ENCODE measurements at regions of chr12 and their contacts with region 1.

Region 1: DNA sequence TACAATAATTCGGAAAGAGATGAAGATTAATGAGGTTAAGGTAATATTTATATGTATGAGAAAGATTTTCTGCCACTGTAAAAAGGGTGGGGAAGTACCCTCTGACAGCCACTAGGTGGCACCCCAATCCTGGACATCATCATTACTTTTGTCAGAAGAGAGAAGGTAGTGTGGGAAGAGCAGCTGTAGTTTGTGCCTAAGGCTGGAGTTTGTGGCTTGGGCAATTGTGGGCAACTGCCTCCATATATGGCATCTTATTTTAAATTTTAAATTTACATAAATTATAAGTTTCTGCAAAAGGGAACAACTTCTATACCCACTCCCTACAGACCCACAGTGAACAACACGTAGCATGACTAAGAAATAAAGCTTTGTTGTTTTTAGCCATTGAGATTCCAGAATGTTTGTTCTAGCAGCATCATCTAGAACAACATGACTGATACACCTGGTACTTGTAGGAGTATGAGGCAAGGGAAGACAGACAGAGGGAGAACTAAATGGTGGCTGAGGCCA is 34.4 kb upstream of the SYCP3 start:
- DNase-seq: peak; percentile 74
- H3K4me3 ChIP-seq: no peak overlapping the region
- H3K27ac ChIP-seq: no peak overlapping the region
- H3K4me1 ChIP-seq: no peaks in the 10 kb centered on the region
- H3K27me3 ChIP-seq: no peaks in the 10 kb centered on the region
- CTCF ChIP-seq: peak; percentile 91

Region 2: DNA sequence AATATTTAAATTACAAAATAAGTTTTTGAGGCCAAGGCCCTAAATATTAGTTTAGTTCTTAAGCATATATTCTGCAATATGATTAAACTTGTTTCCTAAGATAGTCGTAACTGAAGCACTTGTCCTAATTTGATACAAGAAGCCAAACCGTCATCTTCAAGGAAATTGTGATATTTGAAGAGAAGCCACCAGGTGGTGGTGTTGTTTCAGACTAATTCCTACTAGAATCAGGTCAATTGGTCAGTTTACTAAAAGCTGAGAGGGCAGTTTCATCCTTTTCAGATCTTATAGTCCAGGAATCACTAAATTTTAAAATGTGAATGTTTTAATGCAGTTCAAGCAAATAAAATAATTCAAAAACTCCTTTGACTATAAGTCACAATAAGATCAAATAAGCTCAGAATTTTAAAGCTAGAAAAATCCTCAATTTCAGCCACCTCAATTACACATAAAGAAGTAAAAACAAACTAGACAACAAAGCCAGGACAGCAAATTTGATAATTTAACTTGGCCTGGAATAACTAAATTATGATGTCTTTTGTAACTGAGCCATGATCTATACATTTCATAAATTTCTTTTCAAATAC is 359.1 kb before region 1 on chr12:
- CTCF ChIA-PET with region 1: no interaction called
- POLR2A ChIA-PET with region 1: no interaction called
- intact Hi-C with region 1: loop called (anchors 5 kb)
- DNase-seq: peak; percentile 56
- H3K4me3 ChIP-seq: no peak overlapping the region
- H3K27ac ChIP-seq: no peak overlapping the region
- H3K4me1 ChIP-seq: no peaks in the 10 kb centered on the region
- H3K27me3 ChIP-seq: no peaks in the 10 kb centered on the region
- CTCF ChIP-seq: peak; percentile 69

Region 3: DNA sequence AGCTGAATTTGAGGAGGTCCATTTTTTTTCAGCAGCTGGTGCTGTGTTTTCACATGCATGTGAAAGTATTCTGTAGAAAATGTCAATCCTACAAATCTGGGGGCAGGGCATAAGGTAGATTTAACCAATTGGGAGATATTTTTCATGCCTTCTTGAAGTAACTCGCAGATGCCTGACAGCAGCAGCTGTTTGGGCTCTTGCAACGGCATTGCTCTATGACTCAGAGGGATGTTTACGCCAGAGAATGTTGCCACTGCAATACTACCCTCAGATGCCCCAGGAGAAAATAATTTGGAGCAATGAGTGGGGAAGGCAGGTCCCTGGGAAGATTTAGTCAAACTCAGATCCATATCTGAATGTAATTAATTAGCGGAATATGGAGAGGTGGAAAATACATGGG is 221.4 kb before region 1 on chr12:
- CTCF ChIA-PET with region 1: no interaction called
- POLR2A ChIA-PET with region 1: no interaction called
- intact Hi-C with region 1: no loop called
- DNase-seq: peak; percentile 26
- H3K4me3 ChIP-seq: no peak overlapping the region
- H3K27ac ChIP-seq: no peak overlapping the region
- H3K4me1 ChIP-seq: no peaks in the 10 kb centered on the region
- H3K27me3 ChIP-seq: no peaks in the 10 kb centered on the region
- CTCF ChIP-seq: no peak

Region 4: DNA sequence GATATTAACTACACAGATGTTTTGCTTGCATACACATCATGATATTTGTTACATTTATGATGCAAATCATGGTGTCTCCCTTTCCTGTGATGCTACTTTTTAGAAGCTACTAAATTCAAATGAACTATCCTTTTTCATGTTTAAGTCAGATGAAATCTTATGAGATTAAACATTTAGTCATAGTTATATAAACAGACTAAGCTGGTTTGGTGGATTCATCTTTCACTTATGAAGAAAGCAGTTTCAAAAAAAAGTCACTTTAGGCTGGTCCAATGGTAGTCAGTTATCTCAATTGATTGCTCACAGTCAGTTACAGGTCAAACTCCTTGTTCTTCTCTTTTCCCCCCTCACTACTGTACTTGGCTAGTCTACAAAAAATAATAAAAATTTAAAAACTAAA is 54.2 kb before region 1 on chr12:
- CTCF ChIA-PET with region 1: no interaction called
- POLR2A ChIA-PET with region 1: no interaction called
- intact Hi-C with region 1: no loop called
- DNase-seq: no peak
- H3K4me3 ChIP-seq: no peak overlapping the region
- H3K27ac ChIP-seq: no peak overlapping the region
- H3K4me1 ChIP-seq: no peaks in the 10 kb centered on the region
- H3K27me3 ChIP-seq: no peaks in the 10 kb centered on the region
- CTCF ChIP-seq: no peak

Region 5: DNA sequence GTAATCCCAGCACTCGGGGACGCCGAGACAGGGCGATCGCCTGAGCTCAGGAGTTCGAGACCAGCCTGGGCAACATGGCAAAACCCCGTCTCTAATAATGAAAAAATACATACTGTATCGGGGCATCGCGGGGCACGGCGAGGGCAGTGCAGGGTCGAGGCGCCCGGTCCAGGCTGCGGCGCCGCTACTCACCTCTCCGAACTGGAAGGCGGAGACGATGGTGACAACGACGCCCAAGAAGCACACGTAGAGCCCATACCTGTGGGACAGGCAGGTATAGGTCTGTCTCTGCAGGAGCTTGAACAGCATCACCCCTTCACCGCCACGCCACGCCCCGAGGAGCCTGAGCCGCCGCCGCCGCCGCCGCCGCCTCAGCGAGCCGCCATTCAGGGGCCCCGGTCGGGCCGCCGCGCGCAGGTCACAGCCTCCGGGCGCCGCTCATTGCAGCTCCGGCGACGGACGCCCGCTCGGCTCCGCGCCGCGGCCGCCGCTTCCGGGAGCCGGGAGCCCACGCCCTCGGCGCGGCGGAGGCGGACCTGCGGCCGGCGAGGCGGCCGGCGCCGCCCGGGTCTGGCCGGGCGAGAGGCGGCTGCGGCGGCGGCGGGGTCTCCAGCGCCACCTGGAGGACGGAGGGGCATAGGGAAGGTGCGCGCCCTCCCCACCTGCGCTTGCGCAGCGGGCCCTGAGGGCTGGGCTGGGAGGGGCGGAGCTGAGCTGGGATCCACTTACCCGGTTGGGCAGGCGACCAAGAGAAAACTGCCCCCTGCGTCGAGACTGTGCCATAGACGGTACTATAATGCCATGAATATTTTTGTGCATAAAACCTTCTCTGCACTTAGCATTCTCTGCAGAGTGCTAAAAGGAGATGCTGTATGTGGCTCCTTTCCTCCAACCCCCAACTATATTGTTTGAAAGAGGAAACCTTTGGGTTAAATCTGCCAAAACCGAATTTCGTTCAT is 56.9 kb after region 1 on chr12 and contains the start of gene GNPTAB:
- CTCF ChIA-PET with region 1: interaction called, 13 read pairs
- POLR2A ChIA-PET with region 1: no interaction called
- intact Hi-C with region 1: loop called (anchors 2 kb)
- DNase-seq: peak; percentile 95
- H3K4me3 ChIP-seq: peak within 1 kb of the TSS; percentile 81
- H3K27ac ChIP-seq: peak within 1 kb of the TSS; percentile 33
- H3K4me1 ChIP-seq: peaks cover 3% of the 10 kb centered on the region
- H3K27me3 ChIP-seq: no peaks in the 10 kb centered on the region
- CTCF ChIP-seq: peak; percentile 72
- total RNA-seq, gene GNPTAB: 19.9 and 21.7 TPM in 2 replicates

Region 6: GRCh38 chr12:101839324-101840283 is 65.9 kb after region 1 on chr12:
- CTCF ChIA-PET with region 1: interaction called, 5 read pairs
- POLR2A ChIA-PET with region 1: no interaction called
- intact Hi-C with region 1: loop called (anchors 2 kb)
- DNase-seq: peak; percentile 73
- H3K4me3 ChIP-seq: no peak overlapping the region
- H3K27ac ChIP-seq: no peak overlapping the region
- H3K4me1 ChIP-seq: no peaks in the 10 kb centered on the region
- H3K27me3 ChIP-seq: no peaks in the 10 kb centered on the region
- CTCF ChIP-seq: peak; percentile 92

Region 7: DNA sequence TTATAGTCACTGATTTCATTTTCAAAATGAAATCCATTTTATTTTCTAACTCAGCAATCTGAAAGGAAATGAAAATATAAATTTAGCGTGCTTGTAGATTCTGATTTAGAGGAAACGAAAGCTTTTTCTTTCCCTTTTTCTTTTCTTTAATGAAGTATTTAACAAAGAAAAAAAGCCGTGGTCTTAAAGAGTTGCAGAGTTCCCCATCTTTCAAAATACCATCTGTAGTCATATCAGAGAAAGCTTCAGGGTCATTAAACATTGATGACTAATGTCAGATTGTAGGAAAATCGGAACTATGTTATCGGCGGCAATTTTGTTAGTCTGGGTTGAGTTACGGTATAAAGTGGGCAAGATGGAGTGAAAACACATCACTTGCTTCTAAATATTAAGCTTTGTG is 135.9 kb after region 1 on chr12:
- CTCF ChIA-PET with region 1: no interaction called
- POLR2A ChIA-PET with region 1: no interaction called
- intact Hi-C with region 1: loop called (anchors 10 kb)
- DNase-seq: no peak
- H3K4me3 ChIP-seq: no peak overlapping the region
- H3K27ac ChIP-seq: no peak overlapping the region
- H3K4me1 ChIP-seq: no peaks in the 10 kb centered on the region
- H3K27me3 ChIP-seq: no peaks in the 10 kb centered on the region
- CTCF ChIP-seq: no peak

Region 8: GRCh38 chr12:101939856-101940265 is 166.2 kb after region 1 on chr12:
- CTCF ChIA-PET with region 1: no interaction called
- POLR2A ChIA-PET with region 1: no interaction called
- intact Hi-C with region 1: loop called (anchors 5 kb)
- DNase-seq: peak; percentile 87
- H3K4me3 ChIP-seq: no peak overlapping the region
- H3K27ac ChIP-seq: no peak overlapping the region
- H3K4me1 ChIP-seq: peaks cover 29% of the 10 kb centered on the region
- H3K27me3 ChIP-seq: no peaks in the 10 kb centered on the region
- CTCF ChIP-seq: peak; percentile 90

Region 9: GRCh38 chr12:102816816-102817434 is 1043.2 kb after region 1 on chr12:
- CTCF ChIA-PET with region 1: no interaction called
- POLR2A ChIA-PET with region 1: no interaction called
- intact Hi-C with region 1: loop called (anchors 10 kb)
- DNase-seq: peak; percentile 69
- H3K4me3 ChIP-seq: no peak overlapping the region
- H3K27ac ChIP-seq: no peak overlapping the region
- H3K4me1 ChIP-seq: no peaks in the 10 kb centered on the region
- H3K27me3 ChIP-seq: peaks cover 18% of the 10 kb centered on the region
- CTCF ChIP-seq: peak; percentile 79

Measured in A673 (cell line).